AG04450 (cell line): ENCODE measurements at regions of chr3 and their contacts with region 1.

Region 1: GRCh38 chr3:100213891-100214573 is 46.8 kb upstream of the TBC1D23 start:
- DNase-seq: no peak
- H3K4me3 ChIP-seq: no peak overlapping the region
- H3K27ac ChIP-seq: no peak overlapping the region
- H3K27me3 ChIP-seq: no peaks in the 10 kb centered on the region
- CTCF ChIP-seq: no peak

Region 2: DNA sequence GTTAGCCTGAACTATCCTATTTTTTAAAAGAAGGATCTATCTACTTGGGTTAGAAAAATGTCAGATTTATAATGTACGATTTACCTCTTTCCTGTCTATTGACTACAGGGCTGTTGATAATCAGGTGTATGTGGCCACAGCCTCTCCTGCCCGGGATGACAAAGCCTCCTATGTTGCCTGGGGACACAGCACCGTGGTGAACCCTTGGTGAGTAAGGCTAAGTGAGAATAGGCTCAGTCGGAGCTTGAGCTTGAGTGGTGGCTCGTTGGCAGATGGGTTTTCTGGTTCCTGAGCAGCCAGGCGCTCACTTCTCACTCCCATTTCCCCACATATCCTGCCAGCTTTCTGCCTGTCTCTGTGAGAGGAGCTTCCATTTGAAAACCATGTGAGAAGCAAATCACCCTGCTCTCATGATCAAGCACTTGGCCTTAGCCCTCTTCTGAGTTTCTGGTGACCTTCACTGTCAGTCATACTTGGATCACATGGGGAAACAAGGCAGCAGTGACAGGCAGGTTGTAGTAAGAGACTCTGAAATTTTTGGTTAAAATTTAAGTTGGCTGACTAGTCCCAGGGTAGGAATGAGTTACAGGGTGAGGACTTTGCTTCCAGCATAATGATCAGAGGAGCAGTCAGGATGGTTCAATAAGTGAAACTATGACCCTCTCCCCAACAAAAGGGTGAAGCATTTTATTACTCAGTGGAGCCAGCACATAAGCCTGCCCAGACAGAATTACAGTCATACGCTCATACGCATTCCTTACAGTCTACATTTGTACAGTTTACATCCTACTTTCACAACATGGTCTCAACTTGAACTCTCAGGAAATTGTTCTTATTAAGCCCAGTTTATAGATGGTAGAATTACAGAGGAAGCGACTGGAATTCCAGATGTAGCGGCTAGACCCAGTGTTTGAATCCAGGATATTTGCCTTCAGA is 138.5 kb after region 1 on chr3:
- CTCF ChIA-PET with region 1: no interaction called
- POLR2A ChIA-PET with region 1: interaction called, 12 read pairs
- DNase-seq: peak; percentile 6
- H3K4me3 ChIP-seq: no peak overlapping the region
- H3K27ac ChIP-seq: no peak overlapping the region
- H3K27me3 ChIP-seq: no peaks in the 10 kb centered on the region
- CTCF ChIP-seq: no peak